ENCODE measurements at regions of chr14 and their contacts with region 1.

Region 1: DNA sequence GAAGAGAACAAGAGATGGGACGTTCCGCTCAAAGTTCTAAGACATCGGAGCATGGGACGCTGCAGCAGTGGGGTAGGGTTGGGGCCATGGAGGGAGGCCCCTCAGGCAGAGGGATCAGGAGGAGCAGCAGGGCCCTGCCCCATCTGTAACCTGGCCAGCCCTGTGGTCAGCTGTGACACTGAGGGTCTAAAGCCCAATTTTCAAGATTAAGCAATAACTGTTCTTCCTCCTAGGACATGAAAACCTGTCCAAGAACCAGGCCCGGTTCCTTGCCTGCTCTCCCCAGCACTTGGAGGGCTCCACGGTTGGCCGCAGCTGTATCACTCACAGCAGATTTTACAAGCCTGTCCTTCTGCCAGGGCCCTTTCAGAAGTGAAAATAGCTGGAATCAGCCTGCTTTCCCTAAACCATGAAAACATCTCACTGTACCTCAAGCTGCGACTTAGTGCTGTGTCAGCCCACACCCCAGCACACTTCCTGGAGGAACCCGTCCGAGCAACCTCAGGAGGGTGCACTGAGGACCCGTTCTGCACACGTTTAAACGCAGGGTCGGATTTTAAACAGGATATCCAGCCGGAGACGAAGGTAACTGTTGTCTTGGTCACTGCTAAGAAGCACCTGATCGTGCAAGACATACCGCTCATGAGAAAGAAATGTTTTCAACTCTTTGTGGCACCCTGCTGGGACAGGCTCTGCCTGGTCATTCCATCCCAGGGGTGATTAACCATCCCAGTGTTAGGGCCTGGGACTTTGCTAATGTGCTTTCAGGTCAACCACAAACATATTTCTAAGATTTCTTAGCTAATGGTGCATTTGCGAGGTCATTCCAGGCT is 201.9 kb upstream of the DIO3 start:
- DNase-seq: peak; percentile 75
- H3K4me3 ChIP-seq: peak overlapping the region; percentile 61
- H3K27ac ChIP-seq: peak overlapping the region; percentile 98
- H3K4me1 ChIP-seq: peaks cover 70% of the 10 kb centered on the region
- CTCF ChIP-seq: no peak

Region 2: GRCh38 chr14:101449114-101449513 is 89.7 kb after region 1 on chr14:
- CTCF ChIA-PET with region 1: no interaction called
- POLR2A ChIA-PET with region 1: no interaction called
- intact Hi-C with region 1: loop called (anchors 2 kb)
- DNase-seq: peak; percentile 94
- H3K4me3 ChIP-seq: peak overlapping the region; percentile 2
- H3K27ac ChIP-seq: peak overlapping the region; percentile 63
- H3K4me1 ChIP-seq: peaks cover 52% of the 10 kb centered on the region
- CTCF ChIP-seq: no peak; the same call in 1 of the 2 replicates

Region 3: GRCh38 chr14:101559624-101560533 is 200.4 kb after region 1 on chr14:
- CTCF ChIA-PET with region 1: no interaction called
- POLR2A ChIA-PET with region 1: no interaction called
- intact Hi-C with region 1: loop called (anchors 10 kb)
- DNase-seq: no peak
- H3K4me3 ChIP-seq: no peak overlapping the region
- H3K27ac ChIP-seq: no peak overlapping the region
- H3K4me1 ChIP-seq: peaks cover 24% of the 10 kb centered on the region
- CTCF ChIP-seq: no peak

Region 4: DNA sequence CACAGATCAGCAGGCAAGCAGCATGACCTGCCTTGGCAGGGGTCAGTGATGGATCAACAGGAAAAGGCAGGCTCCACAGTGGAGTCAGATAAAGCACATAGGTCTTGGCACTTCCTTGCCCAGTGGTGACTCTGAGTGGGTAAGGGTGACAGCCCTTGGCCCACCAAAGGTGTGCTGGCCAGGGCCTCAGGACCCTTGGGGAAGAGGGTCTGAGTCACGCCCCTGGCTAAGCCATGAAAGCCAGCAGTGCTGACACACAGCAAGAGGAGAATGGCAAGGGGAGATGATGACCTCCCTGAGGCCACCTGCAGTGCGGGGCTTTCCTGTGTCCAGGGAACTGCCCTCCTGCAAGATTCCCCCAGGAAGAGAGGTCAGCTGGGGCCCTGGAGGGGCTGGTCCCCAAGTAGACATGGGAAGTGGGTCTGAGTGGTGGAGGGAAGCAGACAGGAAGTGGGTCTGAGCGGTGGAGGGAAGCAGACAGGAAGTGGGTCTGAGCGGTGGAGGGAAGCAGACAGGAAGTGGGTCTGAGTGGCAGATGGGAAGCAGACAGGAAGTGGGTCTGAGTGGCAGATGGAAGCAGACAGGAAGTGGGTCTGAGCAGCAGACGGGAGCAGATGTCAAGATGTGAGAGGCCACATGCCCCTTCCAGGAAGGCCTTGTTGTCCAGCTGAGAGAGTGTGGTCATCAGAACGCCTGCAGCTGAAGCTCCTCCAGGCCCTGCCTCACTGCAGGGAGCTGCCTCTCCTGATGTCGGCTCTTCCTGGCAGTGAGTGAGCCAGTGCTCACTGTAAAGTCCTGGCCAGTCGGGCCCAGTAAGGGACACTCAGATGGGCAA is 236.7 kb after region 1 on chr14:
- CTCF ChIA-PET with region 1: no interaction called
- POLR2A ChIA-PET with region 1: no interaction called
- intact Hi-C with region 1: loop called (anchors 1 kb)
- DNase-seq: peak; percentile 86
- H3K4me3 ChIP-seq: peak overlapping the region; percentile 34
- H3K27ac ChIP-seq: peak overlapping the region; percentile 60
- H3K4me1 ChIP-seq: peaks cover 16% of the 10 kb centered on the region
- CTCF ChIP-seq: no peak

Region 5: DNA sequence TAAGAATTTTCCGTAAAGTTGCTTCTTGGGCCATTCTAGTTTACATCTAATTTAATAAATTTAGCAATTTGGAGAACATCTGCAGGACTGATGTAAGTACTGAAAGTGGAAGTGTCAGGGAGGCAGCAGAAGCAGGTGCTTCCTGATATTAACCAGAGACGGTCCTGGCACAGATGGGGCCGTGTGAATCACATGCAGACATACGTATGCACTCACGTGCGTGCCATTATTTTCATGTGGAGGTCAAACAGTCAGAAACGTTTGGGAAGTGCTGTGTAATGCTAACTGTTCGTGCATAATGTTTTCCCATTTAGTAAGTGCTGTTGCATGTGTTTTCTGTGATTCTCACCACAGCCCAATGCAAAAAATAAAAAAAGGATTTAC is 517.1 kb after region 1 on chr14:
- CTCF ChIA-PET with region 1: no interaction called
- POLR2A ChIA-PET with region 1: no interaction called
- intact Hi-C with region 1: loop called (anchors 5 kb)
- DNase-seq: peak; percentile 97
- H3K4me3 ChIP-seq: peak overlapping the region; percentile 63
- H3K27ac ChIP-seq: peak overlapping the region; percentile 98
- H3K4me1 ChIP-seq: peaks cover 74% of the 10 kb centered on the region
- CTCF ChIP-seq: no peak

Measured in OCI-LY7 (cell line).